IMR-90 (cell line): ENCODE measurements at regions of chr6 and their contacts with region 1.

Region 1: DNA sequence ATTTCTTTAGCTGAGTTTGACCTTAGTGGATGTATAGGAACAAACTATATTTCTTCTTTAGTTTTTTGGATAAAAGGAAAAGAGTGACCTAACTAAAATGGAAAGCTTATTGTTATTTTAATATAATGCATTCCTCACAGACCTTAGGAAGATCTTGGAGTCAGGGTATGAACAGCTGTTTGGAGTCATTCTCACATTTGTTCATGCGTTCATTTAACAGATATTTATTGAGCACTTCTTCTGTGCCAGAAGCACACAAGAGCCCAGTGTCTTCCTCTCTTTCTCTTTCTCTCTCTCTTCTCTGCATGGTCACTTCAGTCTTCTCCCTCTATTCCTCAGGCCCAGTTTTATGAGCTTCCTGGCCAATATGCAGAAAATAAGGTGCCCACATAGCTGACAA is 744.0 kb upstream of the MAP3K7 start:
- DNase-seq: no peak
- ATAC-seq: no peak
- H3K4me3 ChIP-seq: no peak overlapping the region
- H3K27ac ChIP-seq: no peak overlapping the region
- H3K4me1 ChIP-seq: no peaks in the 10 kb centered on the region
- H3K27me3 ChIP-seq: no peaks in the 10 kb centered on the region
- CTCF ChIP-seq: no peak
- POLR2A ChIP-seq: no peak
- RAD21 ChIP-seq: no peak

Region 2: DNA sequence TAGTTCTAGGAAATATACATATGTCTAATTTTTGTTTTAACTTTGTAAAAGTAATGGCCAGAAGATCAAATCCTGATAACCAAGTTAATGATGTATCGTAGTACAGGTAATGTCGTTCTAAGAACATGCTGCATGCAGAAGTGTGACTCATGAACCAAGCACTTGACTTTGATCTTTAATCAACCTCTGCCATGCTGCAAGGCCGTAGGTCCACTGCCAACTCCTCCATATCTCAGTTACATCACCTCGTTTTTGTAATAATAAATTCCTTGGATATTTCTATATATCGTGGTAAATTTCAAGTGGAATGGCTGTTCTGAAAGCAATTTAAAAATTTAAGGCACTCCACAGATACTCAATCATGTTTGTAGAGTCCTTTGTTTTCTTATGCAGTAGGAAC is 1316.7 kb after region 1 on chr6:
- CTCF ChIA-PET with region 1: no interaction called
- POLR2A ChIA-PET with region 1: no interaction called
- dilution Hi-C with region 1: no loop called
- in situ Hi-C with region 1: no loop called
- intact Hi-C with region 1: loop called (anchors 5 kb)
- DNase-seq: no peak
- ATAC-seq: no peak
- H3K4me3 ChIP-seq: no peak overlapping the region
- H3K27ac ChIP-seq: no peak overlapping the region
- H3K4me1 ChIP-seq: no peaks in the 10 kb centered on the region
- H3K27me3 ChIP-seq: no peaks in the 10 kb centered on the region
- CTCF ChIP-seq: no peak
- POLR2A ChIP-seq: no peak
- RAD21 ChIP-seq: no peak

Region 3: GRCh38 chr6:92777146-92777740 is 1446.3 kb after region 1 on chr6:
- CTCF ChIA-PET with region 1: no interaction called
- POLR2A ChIA-PET with region 1: no interaction called
- dilution Hi-C with region 1: no loop called
- in situ Hi-C with region 1: no loop called
- intact Hi-C with region 1: loop called (anchors 5 kb)
- DNase-seq: peak; percentile 42
- ATAC-seq: peak; percentile 62
- H3K4me3 ChIP-seq: no peak overlapping the region
- H3K27ac ChIP-seq: no peak overlapping the region
- H3K4me1 ChIP-seq: no peaks in the 10 kb centered on the region
- H3K27me3 ChIP-seq: no peaks in the 10 kb centered on the region
- CTCF ChIP-seq: peak; percentile 56
- POLR2A ChIP-seq: no peak
- RAD21 ChIP-seq: peak; percentile 54